Heart right ventricle (tissue), 16 donors: ENCODE measurements at regions of chr3 and their contacts with region 1.

Region 1: DNA sequence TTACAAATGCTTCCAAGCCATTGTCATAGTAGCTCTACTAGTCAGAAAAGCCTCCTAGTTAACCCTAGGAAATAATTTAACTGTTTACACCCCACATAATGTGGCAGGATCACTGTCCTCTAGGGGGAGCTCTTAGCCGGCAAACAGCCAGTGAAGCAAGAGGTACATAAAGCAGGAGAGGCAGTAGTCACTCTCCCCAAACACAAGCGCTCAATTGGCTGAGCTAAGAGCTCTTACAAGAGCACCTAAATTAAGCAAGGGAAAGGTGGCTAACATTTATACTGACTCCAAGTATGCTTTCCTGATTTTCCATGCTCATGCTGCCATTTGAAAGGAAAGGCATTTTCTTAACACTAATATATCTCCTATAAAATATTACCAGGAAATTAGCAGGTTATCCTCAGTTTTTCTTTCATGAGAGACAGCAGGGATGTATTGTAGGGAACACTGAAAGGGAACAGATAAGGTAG is 37.6 kb downstream of the NCEH1 start:
- DNase-seq: peak; percentile 34 to 63
- ATAC-seq: peak; percentile 53 to 86 (median 65)
- H3K4me3 ChIP-seq: no peak overlapping the region
- H3K27ac ChIP-seq: peak overlapping the region in 8 of 10 donors; percentile 5 to 64 (median 37)
- H3K4me1 ChIP-seq: peaks cover 0 to 65% (median 40%) of the 10 kb centered on the region in 9 donors
- H3K27me3 ChIP-seq: no peaks in the 10 kb centered on the region
- CTCF ChIP-seq: peak; percentile 51 to 77 (median 73)

Region 2: GRCh38 chr3:172355839-172356238 is 317.4 kb before region 1 on chr3:
- intact Hi-C with region 1: loop called in 3 of 10 experiments (anchors 10 kb)
- DNase-seq: no peak
- ATAC-seq: peak in 6 of 8 donors; percentile 45 to 75 (median 62)
- H3K4me3 ChIP-seq: no peak overlapping the region
- H3K27ac ChIP-seq: peak overlapping the region in 2 of 10 donors; percentile 12 to 22
- H3K4me1 ChIP-seq: peaks cover 0 to 44% (median 28%) of the 10 kb centered on the region in 9 donors
- H3K27me3 ChIP-seq: no peaks in the 10 kb centered on the region
- CTCF ChIP-seq: no peak

Region 3: GRCh38 chr3:172367205-172368105 is 305.8 kb before region 1 on chr3:
- intact Hi-C with region 1: loop called in 1 of 10 experiments (anchors 10 kb)
- DNase-seq: no peak
- ATAC-seq: peak in 1 of 8 donors; percentile 9
- H3K4me3 ChIP-seq: no peak overlapping the region
- H3K27ac ChIP-seq: peak overlapping the region in 4 of 10 donors; percentile 6 to 24 (median 12)
- H3K4me1 ChIP-seq: peaks cover 0 to 28% (median 10%) of the 10 kb centered on the region in 9 donors
- H3K27me3 ChIP-seq: no peaks in the 10 kb centered on the region
- CTCF ChIP-seq: no peak

Region 4: DNA sequence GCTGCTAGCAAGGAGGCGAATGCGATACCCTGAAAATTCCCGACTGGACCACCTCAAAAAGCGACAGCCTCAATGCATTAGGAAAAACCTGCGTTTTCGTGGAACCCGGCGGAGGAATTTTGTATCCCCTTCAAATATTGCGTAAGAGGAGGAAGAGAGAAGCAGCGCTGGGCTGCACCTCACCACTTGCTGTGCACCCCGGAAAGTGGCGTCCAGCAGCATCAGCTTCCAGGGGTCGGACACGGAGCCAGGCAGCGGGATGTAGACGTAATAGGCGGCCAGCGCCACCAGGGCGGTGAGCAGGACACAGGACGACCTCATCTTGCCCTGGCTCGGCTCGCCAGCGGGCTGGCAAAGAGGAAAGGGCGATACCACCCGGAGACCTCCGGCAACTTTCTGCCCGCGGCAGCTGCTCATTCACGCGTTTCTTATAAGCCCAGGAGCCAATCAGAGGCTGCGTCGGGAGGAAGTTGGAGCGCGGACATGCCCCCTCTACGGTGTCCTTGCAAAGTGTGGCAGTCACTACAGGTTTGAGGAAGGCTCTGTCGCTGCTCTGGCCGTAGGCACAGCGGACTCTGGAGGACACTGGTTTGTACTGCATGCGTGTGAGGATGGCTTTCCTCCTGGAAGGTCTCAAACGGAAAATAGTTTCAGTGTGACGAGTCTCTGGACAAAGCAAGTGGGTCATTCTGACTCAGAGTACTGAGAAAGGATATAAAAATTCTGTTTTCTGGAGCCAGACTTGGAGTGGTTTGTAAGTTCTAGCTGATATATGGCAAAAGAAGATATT is 37.6 kb after region 1 on chr3 and contains the start of gene NCEH1:
- intact Hi-C with region 1: loop called in 8 of 10 experiments (anchors 1 to 5 kb)
- DNase-seq: peak; percentile 86 to 92
- ATAC-seq: peak; percentile 97 to 99 (median 98)
- H3K4me3 ChIP-seq: peak within 1 kb of the TSS; percentile 59 to 99 (median 87)
- H3K27ac ChIP-seq: peak within 1 kb of the TSS; percentile 76 to 96 (median 90)
- H3K4me1 ChIP-seq: peaks cover 0 to 50% (median 21%) of the 10 kb centered on the region in 9 donors
- H3K27me3 ChIP-seq: no peaks in the 10 kb centered on the region
- CTCF ChIP-seq: peak; percentile 80 to 97 (median 88)
- total RNA-seq, gene NCEH1: 40.8 to 66.4 (median 51.8) TPM

Region 5: GRCh38 chr3:172750368-172751174 is 77.3 kb after region 1 on chr3 and contains the start of gene ECT2:
- intact Hi-C with region 1: loop called in 3 of 10 experiments (anchors 5 to 10 kb)
- DNase-seq: peak; percentile 98 to 99
- ATAC-seq: peak; percentile 98 to 100 (median 99)
- H3K4me3 ChIP-seq: peak within 1 kb of the TSS; percentile 67 to 87 (median 80)
- H3K27ac ChIP-seq: peak within 1 kb of the TSS; percentile 11 to 91 (median 84)
- H3K4me1 ChIP-seq: peaks cover 0 to 31% (median 19%) of the 10 kb centered on the region in 9 donors
- H3K27me3 ChIP-seq: no peaks in the 10 kb centered on the region
- CTCF ChIP-seq: peak; percentile 59 to 89 (median 80)
- total RNA-seq, gene ECT2: 2.9 to 8.0 (median 5.5) TPM

Region 6: GRCh38 chr3:172836390-172836997 is 163.2 kb after region 1 on chr3:
- intact Hi-C with region 1: no loop called
- DNase-seq: peak in 1 of 2 donors; percentile 62
- ATAC-seq: peak in 2 of 8 donors; percentile 63 to 74
- H3K4me3 ChIP-seq: no peak overlapping the region
- H3K27ac ChIP-seq: no peak overlapping the region
- H3K4me1 ChIP-seq: no peaks in the 10 kb centered on the region
- H3K27me3 ChIP-seq: no peaks in the 10 kb centered on the region
- CTCF ChIP-seq: peak; percentile 23 to 72 (median 63)